Posterior vena cava (tissue), 2 donors: ENCODE measurements at regions of chr14 and their contacts with region 1.

Region 1: GRCh38 chr14:63388763-63389431 is 70.2 kb upstream of the GPHB5 start:
- DNase-seq: peak; percentile 87

Region 2: DNA sequence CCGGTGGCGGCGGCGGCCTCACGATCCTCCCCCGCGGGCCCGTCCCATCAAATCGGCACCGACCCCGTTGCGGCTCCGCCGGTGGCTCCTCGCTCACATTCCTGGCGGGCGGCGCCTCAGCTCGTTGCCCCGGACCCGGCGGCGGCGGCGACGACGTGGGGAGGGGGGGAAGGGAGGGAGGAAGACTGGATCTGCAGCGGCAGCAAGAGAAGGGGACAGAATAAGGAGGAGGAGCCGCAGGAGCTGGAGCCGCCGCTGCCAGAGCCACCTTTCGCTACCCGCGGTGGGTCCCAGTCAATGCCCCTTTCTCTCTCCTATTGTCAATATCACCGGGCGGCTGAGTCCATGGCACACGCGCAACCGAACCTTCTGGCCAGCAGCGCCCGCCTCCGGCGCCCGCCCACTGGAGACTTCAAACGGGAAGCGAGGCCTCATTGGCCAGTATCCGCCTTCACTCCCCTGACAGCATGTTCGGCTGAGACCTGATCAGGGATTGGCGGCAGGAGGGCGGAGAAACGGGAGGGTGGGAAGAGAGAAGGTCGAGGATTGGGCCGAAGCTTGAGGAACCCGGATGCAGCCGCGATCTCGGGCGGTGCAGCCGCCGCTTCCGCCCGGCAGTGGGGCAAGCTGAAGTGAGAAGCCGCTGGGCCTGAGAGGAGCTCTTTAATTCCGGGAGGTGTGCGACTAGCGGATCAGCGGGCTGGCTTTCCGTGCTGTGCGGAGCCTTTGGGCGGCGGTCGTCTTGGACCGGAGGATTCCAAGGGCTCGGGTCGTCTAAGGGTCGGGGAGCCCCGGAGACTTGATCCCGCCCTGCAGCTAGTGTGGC is 154.3 kb after region 1 on chr14 and contains the start of gene PPP2R5E:
- intact Hi-C with region 1: loop called in 1 of 2 experiments (anchors 10 kb)
- DNase-seq: peak; percentile 99
- total RNA-seq, gene PPP2R5E: 34.4 to 44.5 TPM

Region 3: GRCh38 chr14:63603749-63604277 is 214.9 kb after region 1 on chr14:
- intact Hi-C with region 1: loop called in 1 of 2 experiments (anchors 10 kb)
- DNase-seq: no peak

Region 4: DNA sequence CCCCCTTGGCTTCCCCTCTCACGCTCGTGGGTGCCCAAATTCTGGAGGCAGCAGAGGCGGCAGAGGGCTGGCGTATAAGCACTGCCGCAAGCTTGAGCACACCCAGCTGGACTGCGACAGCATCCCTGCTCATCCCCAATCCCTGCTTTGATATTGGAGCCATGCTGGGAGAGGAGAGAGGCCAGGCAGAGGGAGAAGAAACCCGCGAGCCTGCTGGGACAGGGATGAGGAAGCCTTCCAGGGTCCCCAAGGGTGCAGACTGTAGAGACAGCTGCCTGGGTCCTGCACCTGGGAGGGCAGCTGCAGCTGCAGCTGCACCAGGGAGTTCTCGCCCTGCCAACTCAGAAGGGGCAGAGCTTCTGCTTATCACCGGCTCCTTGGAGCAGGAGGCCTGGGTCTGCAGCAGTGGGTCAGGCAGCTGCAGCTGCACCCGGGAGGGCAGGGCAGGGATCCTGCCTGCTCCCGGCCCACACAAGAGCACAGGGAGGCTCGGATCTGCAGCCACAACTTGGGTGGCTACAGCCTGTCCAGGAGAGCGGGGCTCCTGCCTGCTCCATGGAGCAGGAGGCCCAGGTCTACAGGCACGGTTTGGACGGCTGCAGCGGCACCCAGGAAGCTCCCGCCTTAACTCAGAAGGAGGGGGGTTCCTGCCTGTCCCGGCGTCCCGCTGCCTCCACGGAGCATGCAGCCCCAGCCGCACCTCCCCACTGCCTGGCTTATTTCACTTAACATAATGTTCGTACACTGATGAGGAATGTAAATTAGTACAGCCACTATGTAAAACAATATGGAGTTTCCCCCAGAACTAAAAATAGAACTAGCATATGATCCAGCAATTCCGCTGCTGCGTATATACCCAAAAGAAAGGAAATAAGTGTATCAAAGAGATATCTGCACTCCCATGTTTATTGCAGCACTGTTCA is 399.4 kb after region 1 on chr14:
- intact Hi-C with region 1: loop called in 1 of 2 experiments (anchors 5 kb)
- DNase-seq: no peak

Region 5: DNA sequence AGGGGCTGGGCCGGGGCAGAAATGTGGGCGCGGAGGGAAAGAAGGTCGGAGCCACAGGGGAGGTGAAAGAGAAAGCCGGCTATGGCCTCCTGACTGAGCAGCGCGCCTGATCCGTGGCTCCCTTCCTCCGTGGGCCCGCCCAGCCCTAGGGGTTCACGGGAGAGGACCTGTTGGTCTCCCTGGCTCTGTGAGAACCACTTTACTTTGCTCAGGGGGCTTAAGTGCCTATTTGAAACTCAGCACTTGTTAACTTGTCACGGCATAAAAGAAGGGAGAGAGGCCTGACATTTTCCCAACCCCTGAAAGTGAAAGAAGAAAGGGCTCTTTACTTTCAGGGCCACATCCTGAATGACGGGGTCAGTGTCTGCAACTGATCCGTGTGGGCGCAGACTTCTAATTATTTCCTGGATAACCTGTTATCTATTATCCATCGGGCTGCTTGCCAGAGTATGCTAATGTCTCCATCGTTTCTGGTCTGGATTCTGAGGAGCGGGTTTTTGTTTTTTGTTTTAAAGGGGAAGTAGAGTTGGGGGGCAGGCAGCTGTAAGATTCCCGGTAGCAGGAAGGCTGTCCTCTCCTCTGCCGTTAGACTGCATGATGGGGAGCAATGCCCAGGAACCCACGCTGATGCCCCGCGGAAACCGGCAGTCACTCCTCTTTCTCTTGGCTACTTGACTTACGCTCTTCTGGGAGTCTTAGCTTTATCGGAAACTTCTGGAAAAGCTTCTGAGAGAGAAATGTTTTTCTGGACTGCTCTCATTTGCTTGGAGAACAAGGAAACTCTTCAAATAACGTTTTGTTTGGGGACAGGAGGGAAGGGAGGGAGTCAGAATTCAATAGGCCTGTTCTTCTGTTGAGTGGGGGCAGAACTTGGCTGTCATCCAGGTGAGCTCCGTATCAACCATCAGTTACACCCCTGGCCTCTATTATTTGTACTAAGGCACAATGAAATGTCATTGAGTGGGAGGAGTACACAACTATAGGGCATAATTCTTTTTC is 1841.2 kb after region 1 on chr14:
- intact Hi-C with region 1: no loop called
- DNase-seq: no peak